WTC11 (cell line): ENCODE measurements at regions of chr1 and their contacts with region 1.

Region 1: GRCh38 chr1:59947047-59947938 is 20.7 kb upstream of the CYP2J2 start:
- DNase-seq: peak; percentile 58
- ATAC-seq: peak; percentile 97
- H3K4me3 Mint-ChIP-seq: no peak overlapping the region
- H3K27ac Mint-ChIP-seq: no peak overlapping the region
- H3K4me1 Mint-ChIP-seq: no peaks in the 10 kb centered on the region
- H3K27me3 Mint-ChIP-seq: no peaks in the 10 kb centered on the region
- CTCF ChIP-seq: peak; percentile 87

Region 2: GRCh38 chr1:59879574-59879973 is 67.7 kb before region 1 on chr1:
- CTCF ChIA-PET with region 1: interaction called, 156 read pairs
- POLR2A ChIA-PET with region 1: interaction called, 7 read pairs
- DNase-seq: peak; percentile 73
- ATAC-seq: peak; percentile 91
- H3K4me3 Mint-ChIP-seq: no peak overlapping the region
- H3K27ac Mint-ChIP-seq: no peak overlapping the region
- H3K4me1 Mint-ChIP-seq: no peaks in the 10 kb centered on the region; the same call in 1 of the 2 replicates
- H3K27me3 Mint-ChIP-seq: no peaks in the 10 kb centered on the region; the same call in 1 of the 2 replicates
- CTCF ChIP-seq: peak; percentile 44

Region 3: GRCh38 chr1:59892841-59893811 is 54.2 kb before region 1 on chr1:
- CTCF ChIA-PET with region 1: interaction called, 10 read pairs
- POLR2A ChIA-PET with region 1: no interaction called
- DNase-seq: no peak
- ATAC-seq: peak; percentile 50; the same call in 1 of the 2 replicates
- H3K4me3 Mint-ChIP-seq: no peak overlapping the region
- H3K27ac Mint-ChIP-seq: peak overlapping the region; percentile 48; the same call in 1 of the 2 replicates
- H3K4me1 Mint-ChIP-seq: peaks cover 10% of the 10 kb centered on the region
- H3K27me3 Mint-ChIP-seq: no peaks in the 10 kb centered on the region
- CTCF ChIP-seq: no peak

Region 4: GRCh38 chr1:59926381-59927123 is 20.7 kb before region 1 on chr1 and contains the start of gene CYP2J2:
- CTCF ChIA-PET with region 1: interaction called, 12 read pairs
- POLR2A ChIA-PET with region 1: no interaction called
- DNase-seq: peak; percentile 66
- ATAC-seq: peak; percentile 97
- H3K4me3 Mint-ChIP-seq: peak within 1 kb of the TSS; percentile 70
- H3K27ac Mint-ChIP-seq: no peak within 1 kb of the TSS
- H3K4me1 Mint-ChIP-seq: peaks cover 9% of the 10 kb centered on the region
- H3K27me3 Mint-ChIP-seq: peaks cover 58% of the 10 kb centered on the region
- CTCF ChIP-seq: no peak
- total RNA-seq, gene CYP2J2: 0.46 to 0.96 TPM (median 0.92 TPM) in 3 replicates

Region 5: GRCh38 chr1:59971464-59971911 is 24.2 kb after region 1 on chr1:
- CTCF ChIA-PET with region 1: interaction called, 21 read pairs
- POLR2A ChIA-PET with region 1: no interaction called
- DNase-seq: peak; percentile 79
- ATAC-seq: peak; percentile 93
- H3K4me3 Mint-ChIP-seq: peak overlapping the region; percentile 52
- H3K27ac Mint-ChIP-seq: no peak overlapping the region
- H3K4me1 Mint-ChIP-seq: peaks cover 3% of the 10 kb centered on the region; the same call in 1 of the 2 replicates
- H3K27me3 Mint-ChIP-seq: peaks cover 9% of the 10 kb centered on the region
- CTCF ChIP-seq: peak; percentile 93

Region 6: GRCh38 chr1:59994302-59995198 is 47.3 kb after region 1 on chr1:
- CTCF ChIA-PET with region 1: no interaction called
- POLR2A ChIA-PET with region 1: no interaction called
- DNase-seq: no peak
- ATAC-seq: no peak
- H3K4me3 Mint-ChIP-seq: no peak overlapping the region
- H3K27ac Mint-ChIP-seq: no peak overlapping the region
- H3K4me1 Mint-ChIP-seq: peaks cover 22% of the 10 kb centered on the region
- H3K27me3 Mint-ChIP-seq: no peaks in the 10 kb centered on the region
- CTCF ChIP-seq: no peak

Region 7: GRCh38 chr1:60025552-60025951 is 78.3 kb after region 1 on chr1:
- CTCF ChIA-PET with region 1: no interaction called
- POLR2A ChIA-PET with region 1: no interaction called
- DNase-seq: no peak
- ATAC-seq: no peak
- H3K4me3 Mint-ChIP-seq: no peak overlapping the region
- H3K27ac Mint-ChIP-seq: no peak overlapping the region
- H3K4me1 Mint-ChIP-seq: peaks cover 4% of the 10 kb centered on the region
- H3K27me3 Mint-ChIP-seq: peaks cover 3% of the 10 kb centered on the region; the same call in 1 of the 2 replicates
- CTCF ChIP-seq: no peak

Region 8: DNA sequence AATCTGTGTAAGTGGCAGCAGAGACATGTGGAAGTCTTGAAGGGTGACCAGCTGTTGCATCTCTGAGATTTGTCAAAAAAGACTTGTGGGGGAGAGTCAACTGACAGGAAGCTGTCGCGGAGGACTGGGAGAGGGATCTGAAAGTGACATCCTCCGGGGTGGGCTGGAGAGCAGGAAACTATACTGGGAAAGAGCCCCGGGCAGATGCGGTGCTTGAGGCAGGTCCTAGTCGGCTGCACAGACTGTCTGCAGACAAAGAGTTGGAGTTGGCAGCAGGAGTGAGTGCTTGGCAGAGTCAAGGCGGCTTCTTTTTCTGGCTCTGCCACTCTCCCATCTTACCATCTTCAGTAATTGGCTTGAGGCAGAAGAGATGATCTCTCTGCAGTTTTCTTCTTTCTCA is 420.2 kb after region 1 on chr1:
- CTCF ChIA-PET with region 1: no interaction called
- POLR2A ChIA-PET with region 1: no interaction called
- DNase-seq: peak; percentile 16
- ATAC-seq: peak; percentile 81
- H3K4me3 Mint-ChIP-seq: no peak overlapping the region
- H3K27ac Mint-ChIP-seq: no peak overlapping the region
- H3K4me1 Mint-ChIP-seq: no peaks in the 10 kb centered on the region
- H3K27me3 Mint-ChIP-seq: no peaks in the 10 kb centered on the region; the same call in 1 of the 2 replicates
- CTCF ChIP-seq: no peak